ENCODE measurements at regions of chr21 and their contacts with region 1.

Region 1: DNA sequence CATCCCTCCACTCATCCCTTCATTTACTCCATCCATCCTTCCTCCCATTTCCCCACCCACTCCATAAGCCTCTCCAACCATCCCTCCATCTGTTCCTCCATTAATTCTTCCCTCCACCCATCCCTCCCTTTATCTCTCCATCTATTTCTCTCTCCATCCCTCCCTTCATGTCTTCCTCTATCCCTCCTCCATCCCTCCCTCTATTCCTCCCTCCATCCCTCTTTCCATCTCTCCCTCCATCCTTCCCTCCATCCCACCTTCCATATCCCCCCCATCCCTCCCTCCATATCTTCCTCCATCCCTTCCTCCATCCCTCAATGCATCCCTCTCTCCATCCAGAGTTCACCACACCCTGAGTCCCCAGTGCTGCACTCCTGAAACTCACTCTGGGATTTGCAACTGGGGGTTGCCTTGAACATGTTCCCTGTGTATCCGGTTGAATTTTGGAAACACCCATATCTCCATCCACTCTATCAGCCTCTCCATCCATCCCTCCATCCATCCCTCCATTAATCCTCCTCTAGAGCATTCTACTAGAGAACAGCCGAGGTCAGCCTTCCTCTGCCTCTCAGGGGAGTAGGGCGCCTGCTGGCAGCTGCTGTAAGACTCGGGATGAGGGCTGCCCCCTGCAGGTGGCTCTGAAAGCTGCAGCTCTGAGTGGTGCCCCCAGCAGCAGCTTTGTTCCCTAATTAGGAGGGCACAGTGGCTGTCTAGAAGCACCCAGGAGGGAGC is 39.4 kb downstream of the ABCG1 start:
- DNase-seq: peak; percentile 86
- ATAC-seq: peak; percentile 87
- H3K4me3 Mint-ChIP-seq: no peak overlapping the region
- H3K27ac Mint-ChIP-seq: no peak overlapping the region
- H3K4me1 Mint-ChIP-seq: peaks cover 14% of the 10 kb centered on the region; the same call in 1 of the 2 replicates
- H3K27me3 Mint-ChIP-seq: no peaks in the 10 kb centered on the region
- CTCF ChIP-seq: peak; percentile 85

Region 2: DNA sequence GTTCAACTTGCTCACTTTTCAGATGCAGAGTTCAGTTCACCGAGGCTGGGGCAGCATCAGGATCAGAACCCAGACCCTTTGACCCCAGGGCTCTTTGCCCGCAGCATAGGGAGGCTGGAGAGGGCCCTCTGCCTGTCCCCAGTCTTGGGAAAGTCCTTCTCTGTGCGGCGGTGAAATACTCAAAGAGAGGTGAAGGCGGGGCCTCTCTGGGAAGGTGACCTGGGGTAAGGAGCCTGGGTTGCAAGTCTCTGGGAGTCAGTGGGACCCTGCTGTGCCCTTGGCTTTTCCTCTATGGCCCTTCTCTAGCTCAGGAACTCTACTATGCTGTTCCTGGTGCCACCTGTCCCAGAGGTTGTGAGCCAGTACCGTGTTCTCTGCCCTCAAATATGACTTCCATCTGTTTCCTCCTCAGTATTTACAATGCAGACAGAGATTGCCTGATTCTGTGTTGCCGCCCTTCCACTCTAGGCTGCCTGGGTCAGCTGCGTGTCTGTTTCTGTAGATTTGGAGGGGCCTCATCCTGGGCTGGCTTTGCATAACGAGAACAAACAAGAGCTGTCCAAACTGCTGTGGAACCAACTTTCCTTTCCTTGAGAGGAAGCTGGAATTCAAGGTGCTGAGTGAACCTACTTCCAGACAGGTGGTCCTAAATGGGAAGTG is 229.4 kb before region 1 on chr21:
- CTCF ChIA-PET with region 1: no interaction called
- POLR2A ChIA-PET with region 1: no interaction called
- DNase-seq: no peak
- ATAC-seq: no peak
- H3K4me3 Mint-ChIP-seq: no peak overlapping the region
- H3K27ac Mint-ChIP-seq: no peak overlapping the region
- H3K4me1 Mint-ChIP-seq: no peaks in the 10 kb centered on the region
- H3K27me3 Mint-ChIP-seq: no peaks in the 10 kb centered on the region
- CTCF ChIP-seq: no peak

Region 3: GRCh38 chr21:42145569-42146272 is 112.6 kb before region 1 on chr21:
- CTCF ChIA-PET with region 1: interaction called, 32 read pairs
- POLR2A ChIA-PET with region 1: no interaction called
- DNase-seq: peak; percentile 70
- ATAC-seq: peak; percentile 82
- H3K4me3 Mint-ChIP-seq: no peak overlapping the region
- H3K27ac Mint-ChIP-seq: no peak overlapping the region
- H3K4me1 Mint-ChIP-seq: no peaks in the 10 kb centered on the region
- H3K27me3 Mint-ChIP-seq: no peaks in the 10 kb centered on the region
- CTCF ChIP-seq: peak; percentile 89

Region 4: DNA sequence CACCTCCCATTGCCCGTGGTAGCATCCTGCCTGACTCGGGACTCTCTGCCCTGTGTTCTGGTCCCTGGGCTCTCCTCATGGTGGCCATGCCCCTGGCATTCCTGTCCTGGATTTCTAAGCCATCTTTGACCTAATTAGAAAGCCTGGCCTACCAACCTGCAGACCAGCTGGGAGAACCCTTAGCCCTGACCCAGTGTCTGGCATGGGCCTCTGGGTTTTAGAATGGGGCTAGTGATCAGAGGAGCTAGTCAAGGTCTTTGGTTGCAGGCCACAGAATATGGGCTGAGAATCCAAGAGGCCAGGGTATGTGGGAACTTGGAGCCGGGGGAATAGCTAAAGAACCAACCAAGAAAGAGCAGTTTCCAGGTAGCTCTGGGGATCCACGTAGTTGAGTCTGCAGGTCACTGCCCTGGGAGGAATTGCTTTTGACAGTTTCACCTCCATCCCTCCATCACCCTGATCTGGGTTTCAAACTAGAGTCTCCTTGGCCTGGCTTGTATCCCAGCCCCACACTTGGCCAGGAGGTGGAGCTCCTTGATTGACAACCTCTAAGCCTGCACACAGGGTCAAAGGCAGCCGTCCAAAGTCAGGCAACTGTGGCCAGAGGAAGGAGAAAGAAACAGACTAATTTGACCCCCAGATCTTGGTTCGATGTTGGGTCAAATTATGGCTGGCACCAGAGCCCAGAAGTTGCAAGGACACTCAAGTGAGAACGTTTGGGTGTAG is 94.1 kb before region 1 on chr21:
- CTCF ChIA-PET with region 1: interaction called, 16 read pairs
- POLR2A ChIA-PET with region 1: no interaction called
- DNase-seq: peak; percentile 57
- ATAC-seq: peak; percentile 89
- H3K4me3 Mint-ChIP-seq: no peak overlapping the region
- H3K27ac Mint-ChIP-seq: no peak overlapping the region
- H3K4me1 Mint-ChIP-seq: peaks cover 8% of the 10 kb centered on the region
- H3K27me3 Mint-ChIP-seq: no peaks in the 10 kb centered on the region; the same call in 1 of the 2 replicates
- CTCF ChIP-seq: no peak

Region 5: DNA sequence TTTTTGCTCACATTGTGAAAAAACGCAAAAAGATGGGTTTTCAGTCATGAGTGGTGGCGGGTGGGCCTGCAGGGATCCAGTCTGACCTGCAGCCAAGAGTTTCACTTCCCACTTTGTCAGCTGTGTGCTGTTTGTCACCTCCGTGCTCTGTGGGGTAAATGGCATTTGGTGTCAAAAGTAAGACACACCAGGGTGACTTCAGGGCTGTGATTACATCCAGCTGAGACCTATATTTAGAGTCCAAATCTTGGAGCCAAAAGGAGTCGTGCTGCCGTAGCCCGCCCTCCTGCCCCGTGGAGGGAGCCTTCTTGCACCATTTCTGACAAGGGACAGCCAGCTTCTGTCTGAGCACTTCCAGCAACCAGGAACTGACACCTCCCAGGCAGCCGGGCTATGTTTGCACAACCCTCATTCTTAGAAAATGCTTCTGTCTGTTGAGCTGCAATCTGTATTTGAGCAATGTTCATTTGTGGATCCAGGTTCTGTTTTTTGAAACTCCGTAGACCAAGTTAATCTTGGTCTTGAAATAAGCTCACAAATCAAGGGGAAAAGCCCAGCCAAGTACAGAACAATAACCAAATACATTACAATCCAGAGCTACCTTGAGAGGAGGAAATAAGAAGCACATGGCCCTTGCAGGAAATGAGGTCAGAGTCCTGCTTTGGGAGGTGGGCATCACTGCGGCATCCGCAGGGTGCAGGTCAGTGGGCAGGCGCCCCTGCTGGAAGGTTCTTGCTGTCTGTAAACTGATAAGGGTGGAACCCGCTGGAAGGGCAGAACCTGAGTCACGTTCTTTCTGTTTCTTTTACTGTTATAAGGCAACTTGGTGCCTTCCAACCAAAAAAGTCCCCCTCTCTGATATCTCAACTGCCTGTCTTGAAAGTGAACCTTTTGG is 25.0 kb before region 1 on chr21:
- CTCF ChIA-PET with region 1: interaction called, 17 read pairs
- POLR2A ChIA-PET with region 1: interaction called, 5 read pairs
- DNase-seq: peak; percentile 24
- ATAC-seq: no peak; the same call in 1 of the 2 replicates
- H3K4me3 Mint-ChIP-seq: no peak overlapping the region
- H3K27ac Mint-ChIP-seq: 0 out of 2 replicates have a peak overlapping the region, but pooled peaks have one; percentile 45
- H3K4me1 Mint-ChIP-seq: peaks cover 36% of the 10 kb centered on the region
- H3K27me3 Mint-ChIP-seq: peaks cover 35% of the 10 kb centered on the region
- CTCF ChIP-seq: no peak

Region 6: DNA sequence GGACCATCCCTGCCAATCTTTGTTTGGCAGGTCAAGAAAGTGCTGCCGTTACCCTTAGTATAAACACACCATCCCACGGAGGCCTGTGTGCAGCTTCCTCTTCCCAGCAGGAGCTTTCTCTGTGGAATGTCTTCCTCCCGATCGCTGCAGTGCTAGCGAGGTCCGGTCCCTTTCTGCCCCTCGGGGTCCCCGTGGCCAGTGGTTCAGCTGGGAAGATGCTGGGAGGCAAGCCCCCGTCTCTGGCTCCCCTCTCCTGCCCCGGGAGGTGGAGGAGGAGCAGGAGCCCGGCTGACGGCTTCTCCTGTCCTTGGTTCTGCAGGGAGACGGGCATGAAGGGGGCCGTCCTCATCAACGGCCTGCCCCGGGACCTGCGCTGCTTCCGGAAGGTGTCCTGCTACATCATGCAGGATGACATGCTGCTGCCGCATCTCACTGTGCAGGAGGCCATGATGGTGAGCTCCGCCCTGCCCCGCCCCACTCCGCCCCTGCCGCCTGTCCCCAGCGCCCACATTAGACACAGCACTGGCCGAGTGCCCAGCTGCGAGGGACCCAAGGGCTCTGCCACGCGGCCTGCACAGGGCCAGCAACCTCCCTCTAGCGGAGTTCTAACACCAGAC is 14.8 kb after region 1 on chr21:
- CTCF ChIA-PET with region 1: interaction called, 49 read pairs
- POLR2A ChIA-PET with region 1: interaction called, 3 read pairs
- DNase-seq: no peak
- ATAC-seq: no peak
- H3K4me3 Mint-ChIP-seq: no peak overlapping the region
- H3K27ac Mint-ChIP-seq: no peak overlapping the region
- H3K4me1 Mint-ChIP-seq: no peaks in the 10 kb centered on the region
- H3K27me3 Mint-ChIP-seq: no peaks in the 10 kb centered on the region
- CTCF ChIP-seq: no peak